Lower leg skin (tissue), 4 donors: ENCODE measurements at regions of chr15 and their contacts with region 1.

Region 1: GRCh38 chr15:63522225-63522578 is 17.8 kb downstream of the USP3 start:
- DNase-seq: no peak
- H3K4me3 ChIP-seq: no peak overlapping the region
- CTCF ChIP-seq: no peak
- POLR2A ChIP-seq: no peak

Region 2: GRCh38 chr15:63381301-63382204 is 140.6 kb before region 1 on chr15 and contains the start of gene CA12:
- intact Hi-C with region 1: no loop called
- DNase-seq: peak in 1 of 2 donors; percentile 90
- H3K4me3 ChIP-seq: peak within 1 kb of the TSS; percentile 34
- CTCF ChIP-seq: no peak
- POLR2A ChIP-seq: no peak
- total RNA-seq, gene CA12: 144 to 253 (median 213) TPM

Region 3: DNA sequence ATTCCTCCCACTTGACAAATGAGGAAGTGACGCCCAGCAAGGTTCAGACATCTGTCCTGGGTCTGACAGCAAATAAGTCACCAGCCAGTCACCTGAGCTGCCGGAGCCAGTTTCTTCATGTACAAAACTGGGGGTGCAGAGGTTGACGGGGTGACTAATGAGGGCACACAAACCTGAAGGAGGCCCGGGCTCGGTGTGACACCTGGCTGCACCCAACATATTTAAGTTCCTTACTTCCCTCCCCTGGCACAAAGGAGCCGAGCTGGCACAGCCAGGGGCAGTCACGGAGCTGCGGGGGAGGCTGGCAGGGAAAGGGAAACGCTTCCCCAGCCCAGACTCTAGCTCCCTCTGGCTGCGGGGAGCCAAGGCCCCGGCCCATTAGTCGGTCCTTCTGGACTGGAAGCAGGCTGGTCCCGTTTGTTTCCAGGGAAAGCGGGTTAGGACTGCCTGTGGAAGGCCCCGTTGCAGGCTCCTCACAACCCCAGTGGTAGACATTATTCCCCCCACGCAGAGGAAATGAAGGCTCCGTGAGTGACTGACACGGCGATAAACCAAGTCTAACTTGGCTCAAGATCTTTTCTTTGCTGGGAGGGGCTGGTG is 77.3 kb after region 1 on chr15:
- intact Hi-C with region 1: loop called (anchors 10 kb)
- DNase-seq: peak; percentile 60 to 91
- H3K4me3 ChIP-seq: no peak overlapping the region
- CTCF ChIP-seq: peak in 1 of 3 donors; percentile 29
- POLR2A ChIP-seq: no peak